ENCODE measurements at regions of chr4 and their contacts with region 1.

Region 1: DNA sequence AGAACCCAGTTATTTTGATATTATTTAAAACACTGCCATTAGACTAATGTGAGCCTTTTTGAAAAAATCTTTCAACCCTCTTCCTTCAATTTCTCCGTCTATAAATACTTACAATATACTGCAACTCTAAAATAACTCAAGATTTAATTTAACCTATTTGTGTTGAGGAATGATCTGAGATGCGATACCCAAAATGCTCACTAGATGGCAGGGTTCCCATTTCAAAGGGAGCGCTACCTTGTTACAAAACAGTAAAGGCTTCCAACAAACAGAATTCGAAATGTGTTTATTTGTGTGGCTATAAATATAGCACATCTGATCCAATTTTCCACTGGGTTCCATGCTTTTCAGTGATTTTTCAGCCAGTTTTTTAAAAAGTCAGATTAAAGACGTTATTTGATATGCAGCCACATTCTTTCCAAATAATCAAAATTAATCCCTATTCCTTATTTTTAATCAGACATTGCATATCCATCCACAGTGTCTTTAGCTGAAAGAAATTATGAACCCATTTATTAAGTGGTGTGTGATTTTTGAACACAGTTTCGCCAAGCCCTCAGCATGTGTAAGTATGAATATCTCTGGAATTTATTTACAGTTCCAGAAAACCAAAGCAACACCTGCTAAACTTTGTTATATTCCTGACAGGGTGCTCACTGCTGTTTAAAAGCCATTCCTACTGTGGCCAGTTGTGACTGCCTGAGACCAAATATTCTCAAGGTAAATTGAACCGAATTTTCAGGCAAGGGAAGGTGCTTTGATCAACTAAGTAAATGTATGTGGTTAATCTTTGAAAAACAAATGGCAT is 668.0 kb upstream of the LCORL start:
- H3K4me3 Mint-ChIP-seq: no peak overlapping the region
- H3K27ac Mint-ChIP-seq: no peak overlapping the region
- H3K4me1 Mint-ChIP-seq: no peaks in the 10 kb centered on the region
- H3K27me3 Mint-ChIP-seq: peaks cover 2% of the 10 kb centered on the region

Region 2: DNA sequence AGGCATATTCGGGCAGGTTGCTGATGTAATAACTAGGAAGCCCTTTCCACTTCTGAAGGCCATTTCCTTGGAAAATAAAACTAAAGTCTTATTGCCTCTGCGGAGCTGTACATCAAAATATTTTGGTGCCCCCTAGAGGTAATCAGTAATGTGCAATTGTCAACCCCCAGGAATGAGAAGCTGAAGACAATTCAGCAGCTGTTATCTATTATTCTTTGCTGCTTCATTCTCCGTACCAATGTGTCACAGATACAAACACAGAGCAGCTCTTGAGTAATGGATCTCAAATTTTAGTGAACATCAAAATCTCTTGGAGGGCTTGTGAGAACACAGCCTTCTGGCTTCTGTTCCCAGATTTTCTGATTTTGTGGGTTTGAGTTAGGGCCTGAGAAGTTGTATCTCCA is 1558.6 kb after region 1 on chr4:
- intact Hi-C with region 1: loop called (anchors 5 kb)
- H3K4me3 Mint-ChIP-seq: no peak overlapping the region
- H3K27ac Mint-ChIP-seq: no peak overlapping the region
- H3K4me1 Mint-ChIP-seq: no peaks in the 10 kb centered on the region
- H3K27me3 Mint-ChIP-seq: peaks cover 36% of the 10 kb centered on the region